Right cardiac atrium (tissue), 5 donors: ENCODE measurements at regions of chr1 and their contacts with region 1.

Region 1: DNA sequence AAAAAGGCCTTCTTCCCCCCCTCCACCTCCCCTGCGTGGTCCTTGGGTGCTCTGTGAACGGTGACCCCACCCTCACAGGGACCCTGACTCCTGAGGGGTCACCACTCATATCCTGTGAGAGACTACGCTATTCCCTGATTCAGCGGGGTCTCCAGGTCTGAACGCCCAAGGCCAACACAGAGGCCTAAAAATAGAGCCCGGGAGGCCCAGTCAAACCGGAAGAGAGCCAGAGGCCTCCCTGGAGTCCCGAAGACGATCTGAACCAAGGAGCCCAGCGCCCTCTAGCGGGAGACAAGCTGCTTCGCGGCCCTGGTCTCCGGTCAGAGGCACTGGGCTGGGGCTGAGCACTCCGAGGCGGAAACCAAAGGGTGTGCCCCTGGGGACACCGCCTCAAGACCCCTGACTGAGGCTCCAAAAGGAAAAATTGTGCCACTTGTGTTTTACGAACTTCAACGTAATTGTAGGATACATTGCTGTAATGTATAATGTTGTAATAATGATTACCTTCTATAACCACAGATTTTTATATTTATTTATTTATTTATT is 42.4 kb upstream of the PSEN2 start:
- DNase-seq: peak; percentile 97 to 98 (median 97)
- ATAC-seq: peak; percentile 96 to 98
- H3K4me3 ChIP-seq: peak overlapping the region; percentile 35
- H3K27ac ChIP-seq: peak overlapping the region; percentile 98
- H3K4me1 ChIP-seq: no peaks in the 10 kb centered on the region
- H3K27me3 ChIP-seq: no peaks in the 10 kb centered on the region

Region 2: GRCh38 chr1:226424228-226425003 is 403.6 kb before region 1 on chr1:
- intact Hi-C with region 1: loop called in 1 of 4 experiments (anchors 10 kb)
- DNase-seq: no peak
- ATAC-seq: peak; percentile 65 to 79
- H3K4me3 ChIP-seq: no peak overlapping the region
- H3K27ac ChIP-seq: no peak overlapping the region
- H3K4me1 ChIP-seq: no peaks in the 10 kb centered on the region
- H3K27me3 ChIP-seq: no peaks in the 10 kb centered on the region

Region 3: GRCh38 chr1:226547754-226548191 is 280.3 kb before region 1 on chr1:
- intact Hi-C with region 1: loop called in 3 of 4 experiments (anchors 5 to 10 kb)
- DNase-seq: peak; percentile 81 to 92 (median 87)
- ATAC-seq: peak; percentile 75 to 83
- H3K4me3 ChIP-seq: peak overlapping the region; percentile 74
- H3K27ac ChIP-seq: no peak overlapping the region
- H3K4me1 ChIP-seq: peaks cover 12% of the 10 kb centered on the region
- H3K27me3 ChIP-seq: no peaks in the 10 kb centered on the region

Region 4: GRCh38 chr1:226619031-226619430 is 209.0 kb before region 1 on chr1:
- intact Hi-C with region 1: no loop called
- DNase-seq: peak in 2 of 3 donors; percentile 21 to 24
- ATAC-seq: no peak
- H3K4me3 ChIP-seq: no peak overlapping the region
- H3K27ac ChIP-seq: no peak overlapping the region
- H3K4me1 ChIP-seq: no peaks in the 10 kb centered on the region
- H3K27me3 ChIP-seq: no peaks in the 10 kb centered on the region

Region 5: GRCh38 chr1:226634166-226634588 is 193.9 kb before region 1 on chr1:
- intact Hi-C with region 1: loop called (anchors 1 to 5 kb)
- DNase-seq: peak; percentile 85 to 95 (median 92)
- ATAC-seq: peak; percentile 79 to 81
- H3K4me3 ChIP-seq: no peak overlapping the region
- H3K27ac ChIP-seq: no peak overlapping the region
- H3K4me1 ChIP-seq: no peaks in the 10 kb centered on the region
- H3K27me3 ChIP-seq: no peaks in the 10 kb centered on the region

Region 6: DNA sequence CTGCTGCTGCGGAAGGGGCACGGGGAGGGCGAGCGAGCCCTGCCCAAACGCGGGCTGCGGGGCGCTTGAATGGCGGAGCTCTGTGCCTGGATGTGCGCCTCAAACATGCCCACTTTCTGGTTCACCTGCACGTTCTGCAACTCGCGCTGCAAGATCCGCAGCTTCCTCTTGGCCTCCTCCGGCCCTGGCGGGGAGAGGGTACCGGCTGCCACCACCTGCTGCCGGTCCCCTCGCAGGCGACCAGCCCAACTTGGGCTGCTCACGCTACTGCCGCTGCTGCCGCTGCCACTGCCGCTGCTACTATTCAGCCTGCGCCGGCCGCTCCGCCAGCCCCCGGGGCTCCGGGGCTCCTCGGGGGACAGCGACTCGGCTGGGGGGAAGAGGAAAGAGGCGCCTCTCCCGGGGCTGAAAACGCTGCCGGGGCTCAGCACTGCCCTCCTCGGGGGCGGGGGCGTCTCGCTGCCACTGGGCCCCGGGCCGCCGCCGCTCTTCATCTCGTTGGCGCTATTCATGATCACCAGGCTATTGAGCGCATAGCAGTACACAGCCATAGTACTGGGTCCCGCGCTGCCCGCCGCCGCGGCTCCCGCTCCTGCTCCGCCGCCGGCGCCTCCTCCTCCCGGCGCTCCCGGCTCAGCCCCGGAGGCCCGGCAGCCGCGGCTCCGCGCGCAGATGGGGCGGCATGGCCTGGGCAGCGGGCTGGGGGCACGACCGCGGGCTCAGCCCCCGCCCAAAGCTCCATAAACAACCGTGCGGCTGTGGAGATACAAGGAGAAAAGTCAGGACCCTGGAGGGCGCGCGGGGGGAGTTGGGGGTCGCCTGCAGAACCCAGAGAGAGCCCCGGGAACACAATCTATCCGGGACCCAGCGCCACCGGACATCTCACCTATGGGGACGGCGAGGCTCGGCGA is 90.9 kb before region 1 on chr1:
- intact Hi-C with region 1: loop called in 3 of 4 experiments (anchors 5 to 10 kb)
- DNase-seq: peak; percentile 32 to 79 (median 78)
- ATAC-seq: peak; percentile 53 to 72
- H3K4me3 ChIP-seq: peak overlapping the region; percentile 90
- H3K27ac ChIP-seq: peak overlapping the region; percentile 67
- H3K4me1 ChIP-seq: no peaks in the 10 kb centered on the region
- H3K27me3 ChIP-seq: no peaks in the 10 kb centered on the region